Naive thymus-derived CD4-positive, alpha-beta T cell (primary cell): ENCODE measurements at regions of chr9 and their contacts with region 1.

Region 1: GRCh38 chr9:83920927-83921707 is at the start of gene KIF27:
- DNase-seq: peak; percentile 91 to 99 (median 93)
- ATAC-seq: peak; percentile 94
- H3K4me3 ChIP-seq: peak within 1 kb of the TSS; percentile 59
- H3K4me3 Mint-ChIP-seq: peak within 1 kb of the TSS; percentile 87 to 96 (median 92)
- H3K27ac ChIP-seq: peak within 1 kb of the TSS; percentile 96
- H3K27ac Mint-ChIP-seq: peak within 1 kb of the TSS; percentile 89 to 98 (median 96)
- H3K4me1 ChIP-seq: peaks cover 4 to 8% of the 10 kb centered on the region in 2 donors
- H3K4me1 Mint-ChIP-seq: peaks cover 0 to 20% (median 13%) of the 10 kb centered on the region in 7 donors
- H3K27me3 ChIP-seq: no peaks in the 10 kb centered on the region
- H3K27me3 Mint-ChIP-seq: no peaks in the 10 kb centered on the region
- total RNA-seq, gene KIF27: 3.5 to 6.7 (median 5.3) TPM

Region 2: DNA sequence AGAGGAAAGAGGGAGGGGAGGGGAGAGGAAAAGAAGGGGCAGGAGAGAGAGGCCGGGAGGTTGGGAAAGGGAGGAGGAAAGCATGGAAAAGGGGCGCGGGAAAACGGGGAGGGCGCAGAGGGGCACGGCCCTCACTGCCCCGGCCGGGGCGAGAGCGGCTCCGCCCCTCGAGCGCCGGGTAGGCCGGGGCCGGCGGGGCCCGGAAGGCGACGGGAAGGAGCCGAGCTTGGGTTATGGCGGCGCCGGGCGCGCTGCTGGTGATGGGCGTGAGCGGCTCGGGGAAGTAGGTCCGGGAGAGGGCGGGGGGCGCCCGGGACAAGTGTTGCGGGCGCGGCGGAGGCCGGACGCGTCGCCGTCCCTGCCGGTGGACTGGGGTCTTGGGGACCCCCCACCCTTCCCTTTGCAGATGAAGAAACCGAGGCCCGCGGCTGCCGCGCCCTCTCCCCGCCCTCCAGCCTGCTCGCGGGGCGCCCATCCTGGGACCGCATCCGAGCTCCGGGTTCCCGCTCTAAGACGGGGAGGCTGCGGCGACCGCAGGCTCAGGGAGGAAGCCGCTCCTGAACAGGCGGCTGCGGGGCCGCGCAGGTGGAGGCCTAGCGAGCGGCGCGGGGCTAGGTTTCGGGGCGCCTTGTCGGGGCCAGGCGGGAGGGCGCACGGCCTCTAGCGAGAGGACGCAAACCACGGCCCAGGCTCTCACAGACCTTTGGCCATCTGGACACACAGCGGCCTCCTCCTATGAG is 298.0 kb before region 1 on chr9 and contains the start of gene IDNK:
- CTCF ChIA-PET with region 1: no interaction called
- POLR2A ChIA-PET with region 1: interaction called, 6 read pairs
- intact Hi-C with region 1: loop called (anchors 1 kb)
- DNase-seq: peak; percentile 52 to 76 (median 64)
- ATAC-seq: peak; percentile 90
- H3K4me3 ChIP-seq: peak within 1 kb of the TSS; percentile 59
- H3K4me3 Mint-ChIP-seq: peak within 1 kb of the TSS; percentile 90 to 96 (median 96)
- H3K27ac ChIP-seq: peak within 1 kb of the TSS; percentile 83
- H3K27ac Mint-ChIP-seq: peak within 1 kb of the TSS; percentile 74 to 98 (median 96)
- H3K4me1 ChIP-seq: peaks cover 8 to 11% of the 10 kb centered on the region in 2 donors
- H3K4me1 Mint-ChIP-seq: peaks cover 21 to 51% (median 30%) of the 10 kb centered on the region in 7 donors
- H3K27me3 ChIP-seq: no peaks in the 10 kb centered on the region
- H3K27me3 Mint-ChIP-seq: peaks cover 0 to 14% (median 0%) of the 10 kb centered on the region in 5 donors
- total RNA-seq, gene IDNK: 8.5 to 11.3 (median 10.9) TPM

Region 3: GRCh38 chr9:83932021-83932420 is 10.9 kb after region 1 on chr9:
- CTCF ChIA-PET with region 1: interaction called, 6 read pairs
- POLR2A ChIA-PET with region 1: interaction called, 4 read pairs
- intact Hi-C with region 1: loop called in 1 of 2 experiments (anchors 1 kb)
- DNase-seq: no peak
- ATAC-seq: no peak
- H3K4me3 ChIP-seq: no peak overlapping the region
- H3K4me3 Mint-ChIP-seq: no peak overlapping the region
- H3K27ac ChIP-seq: no peak overlapping the region
- H3K27ac Mint-ChIP-seq: peak overlapping the region in 3 of 9 donors; percentile 8 to 28 (median 20)
- H3K4me1 ChIP-seq: no peaks in the 10 kb centered on the region
- H3K4me1 Mint-ChIP-seq: peaks cover 0 to 25% (median 11%) of the 10 kb centered on the region in 7 donors
- H3K27me3 ChIP-seq: peaks cover 0 to 2% of the 10 kb centered on the region in 2 donors
- H3K27me3 Mint-ChIP-seq: peaks cover 0 to 5% (median 0%) of the 10 kb centered on the region in 5 donors

Region 4: GRCh38 chr9:83956434-83957247 is 35.5 kb after region 1 on chr9:
- CTCF ChIA-PET with region 1: interaction called, 5 read pairs
- POLR2A ChIA-PET with region 1: interaction called, 5 read pairs
- intact Hi-C with region 1: loop called (anchors 1 kb)
- DNase-seq: peak; percentile 25 to 73 (median 42)
- ATAC-seq: peak; percentile 76
- H3K4me3 ChIP-seq: peak overlapping the region; percentile 88
- H3K4me3 Mint-ChIP-seq: peak overlapping the region; percentile 94 to 98 (median 95)
- H3K27ac ChIP-seq: peak overlapping the region; percentile 77
- H3K27ac Mint-ChIP-seq: peak overlapping the region; percentile 88 to 99 (median 94)
- H3K4me1 ChIP-seq: peaks cover 4 to 13% of the 10 kb centered on the region in 2 donors
- H3K4me1 Mint-ChIP-seq: peaks cover 6 to 23% (median 19%) of the 10 kb centered on the region in 7 donors
- H3K27me3 ChIP-seq: no peaks in the 10 kb centered on the region
- H3K27me3 Mint-ChIP-seq: no peaks in the 10 kb centered on the region

Region 5: DNA sequence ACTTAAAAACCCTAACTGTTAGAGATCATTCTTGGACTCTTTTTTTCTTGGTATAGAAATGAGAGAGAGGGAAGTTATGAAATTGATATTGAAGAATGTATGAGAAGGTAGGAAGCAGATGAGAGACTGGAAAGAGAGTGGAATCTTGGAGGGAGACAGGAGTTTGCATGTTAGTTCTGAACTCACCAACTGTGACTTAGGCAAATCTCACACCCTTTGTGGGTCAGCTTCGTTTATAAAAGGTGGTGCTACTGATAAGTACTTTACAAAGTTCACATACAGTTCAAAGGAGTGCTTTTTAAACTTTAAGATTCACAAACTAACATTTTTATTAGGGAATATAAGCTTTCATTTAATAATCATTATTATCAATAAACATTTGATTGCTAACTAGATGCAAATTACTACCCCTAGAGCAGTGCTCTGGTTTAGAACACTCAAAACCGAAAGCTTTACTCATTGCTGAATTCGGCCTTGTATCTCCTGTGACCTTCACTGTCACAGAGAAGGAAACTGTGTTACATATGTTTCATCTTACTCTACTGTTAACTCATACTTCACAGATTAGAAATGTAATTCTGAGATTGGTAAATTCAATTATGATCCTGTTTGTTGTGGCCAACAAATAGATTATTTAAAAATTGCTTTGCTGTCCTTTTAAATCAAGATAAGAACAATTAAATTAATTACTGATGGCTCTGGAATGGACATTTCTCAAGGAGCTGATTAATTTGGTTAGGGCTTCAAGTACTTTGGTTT is 202.7 kb after region 1 on chr9:
- CTCF ChIA-PET with region 1: no interaction called
- POLR2A ChIA-PET with region 1: no interaction called
- intact Hi-C with region 1: no loop called
- DNase-seq: no peak
- ATAC-seq: no peak
- H3K4me3 ChIP-seq: no peak overlapping the region
- H3K4me3 Mint-ChIP-seq: no peak overlapping the region
- H3K27ac ChIP-seq: no peak overlapping the region
- H3K27ac Mint-ChIP-seq: no peak overlapping the region
- H3K4me1 ChIP-seq: no peaks in the 10 kb centered on the region
- H3K4me1 Mint-ChIP-seq: no peaks in the 10 kb centered on the region
- H3K27me3 ChIP-seq: no peaks in the 10 kb centered on the region
- H3K27me3 Mint-ChIP-seq: peaks cover 8 to 38% (median 22%) of the 10 kb centered on the region in 5 donors

Region 6: DNA sequence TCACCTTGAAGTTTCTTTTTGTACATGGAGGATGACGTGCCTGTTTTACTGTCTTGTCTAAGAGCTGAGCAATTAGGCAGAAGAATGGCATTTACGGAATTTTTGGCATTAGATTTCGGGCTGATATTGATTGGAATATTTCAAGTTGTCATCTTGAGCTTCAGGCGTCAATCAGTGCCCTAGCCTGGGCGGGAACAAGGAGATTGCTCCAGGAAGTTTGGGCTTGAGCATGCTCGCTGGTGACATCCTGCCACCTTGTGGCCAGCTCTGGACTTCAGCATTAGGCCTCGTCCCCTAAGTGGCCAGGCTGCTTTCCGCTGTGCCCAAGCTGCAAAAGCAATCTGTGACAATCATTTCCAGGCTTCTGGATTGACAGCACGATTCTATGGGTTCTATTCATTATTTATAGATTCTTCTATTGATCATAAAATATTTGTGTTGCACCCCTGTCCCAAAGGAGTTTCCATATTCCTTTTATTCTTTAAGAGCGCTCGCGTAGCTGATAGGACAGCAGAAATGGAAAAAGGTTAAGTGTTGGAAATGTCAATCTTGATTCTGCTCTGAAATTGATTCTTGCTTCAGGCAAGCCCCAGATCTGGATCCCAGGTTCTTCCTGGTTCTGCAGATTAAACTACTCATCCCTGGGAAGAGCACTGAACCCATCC is 340.1 kb after region 1 on chr9:
- CTCF ChIA-PET with region 1: no interaction called
- POLR2A ChIA-PET with region 1: interaction called, 4 read pairs
- intact Hi-C with region 1: loop called (anchors 5 kb)
- DNase-seq: peak; percentile 7 to 46 (median 22)
- ATAC-seq: peak; percentile 77
- H3K4me3 ChIP-seq: no peak overlapping the region
- H3K4me3 Mint-ChIP-seq: peak overlapping the region in 5 of 10 donors; percentile 4 to 68 (median 26)
- H3K27ac ChIP-seq: no peak overlapping the region
- H3K27ac Mint-ChIP-seq: no peak overlapping the region
- H3K4me1 ChIP-seq: no peaks in the 10 kb centered on the region
- H3K4me1 Mint-ChIP-seq: peaks cover 0 to 14% (median 4%) of the 10 kb centered on the region in 7 donors
- H3K27me3 ChIP-seq: no peaks in the 10 kb centered on the region
- H3K27me3 Mint-ChIP-seq: peaks cover 0 to 17% (median 0%) of the 10 kb centered on the region in 5 donors

Region 7: DNA sequence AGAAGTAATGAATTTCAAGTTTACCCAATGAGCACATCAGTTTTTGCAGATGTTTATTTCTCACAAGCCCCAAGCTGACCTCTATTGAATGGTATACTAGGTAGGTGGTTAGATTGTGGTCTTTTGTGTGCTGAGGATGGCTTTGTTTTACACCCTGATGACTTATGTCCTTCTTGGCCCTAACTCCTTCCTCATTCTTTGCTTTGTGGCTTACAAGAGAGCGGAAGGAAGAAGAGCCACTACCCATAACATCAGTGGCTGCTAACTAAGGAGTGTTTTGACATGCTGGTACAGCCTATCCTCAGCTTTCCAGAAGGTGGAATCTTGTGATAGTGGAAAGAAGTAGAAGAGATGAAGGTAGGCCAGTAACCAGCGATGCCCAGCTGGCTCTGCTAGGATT is 662.7 kb after region 1 on chr9:
- CTCF ChIA-PET with region 1: no interaction called
- POLR2A ChIA-PET with region 1: no interaction called
- intact Hi-C with region 1: no loop called
- DNase-seq: no peak
- ATAC-seq: no peak
- H3K4me3 ChIP-seq: no peak overlapping the region
- H3K4me3 Mint-ChIP-seq: no peak overlapping the region
- H3K27ac ChIP-seq: no peak overlapping the region
- H3K27ac Mint-ChIP-seq: no peak overlapping the region
- H3K4me1 ChIP-seq: no peaks in the 10 kb centered on the region
- H3K4me1 Mint-ChIP-seq: peaks cover 0 to 2% (median 0%) of the 10 kb centered on the region in 7 donors
- H3K27me3 ChIP-seq: no peaks in the 10 kb centered on the region
- H3K27me3 Mint-ChIP-seq: peaks cover 0 to 12% (median 3%) of the 10 kb centered on the region in 5 donors

Region 8: GRCh38 chr9:85741875-85742629 is 1820.9 kb after region 1 on chr9 and contains the start of gene AGTPBP1:
- CTCF ChIA-PET with region 1: no interaction called
- POLR2A ChIA-PET with region 1: no interaction called
- intact Hi-C with region 1: loop called (anchors 1 to 2 kb)
- DNase-seq: peak; percentile 95 to 99 (median 97)
- ATAC-seq: peak; percentile 93
- H3K4me3 ChIP-seq: peak within 1 kb of the TSS; percentile 88
- H3K4me3 Mint-ChIP-seq: peak within 1 kb of the TSS; percentile 90 to 99 (median 95)
- H3K27ac ChIP-seq: peak within 1 kb of the TSS; percentile 93
- H3K27ac Mint-ChIP-seq: peak within 1 kb of the TSS; percentile 91 to 99 (median 95)
- H3K4me1 ChIP-seq: peaks cover 0 to 14% of the 10 kb centered on the region in 2 donors
- H3K4me1 Mint-ChIP-seq: peaks cover 14 to 48% (median 33%) of the 10 kb centered on the region in 7 donors
- H3K27me3 ChIP-seq: no peaks in the 10 kb centered on the region
- H3K27me3 Mint-ChIP-seq: peaks cover 0 to 18% (median 0%) of the 10 kb centered on the region in 5 donors
- total RNA-seq, gene AGTPBP1: 31.9 to 85.7 (median 59.6) TPM